ENCODE measurements at regions of chr6 and their contacts with region 1.

Region 1: DNA sequence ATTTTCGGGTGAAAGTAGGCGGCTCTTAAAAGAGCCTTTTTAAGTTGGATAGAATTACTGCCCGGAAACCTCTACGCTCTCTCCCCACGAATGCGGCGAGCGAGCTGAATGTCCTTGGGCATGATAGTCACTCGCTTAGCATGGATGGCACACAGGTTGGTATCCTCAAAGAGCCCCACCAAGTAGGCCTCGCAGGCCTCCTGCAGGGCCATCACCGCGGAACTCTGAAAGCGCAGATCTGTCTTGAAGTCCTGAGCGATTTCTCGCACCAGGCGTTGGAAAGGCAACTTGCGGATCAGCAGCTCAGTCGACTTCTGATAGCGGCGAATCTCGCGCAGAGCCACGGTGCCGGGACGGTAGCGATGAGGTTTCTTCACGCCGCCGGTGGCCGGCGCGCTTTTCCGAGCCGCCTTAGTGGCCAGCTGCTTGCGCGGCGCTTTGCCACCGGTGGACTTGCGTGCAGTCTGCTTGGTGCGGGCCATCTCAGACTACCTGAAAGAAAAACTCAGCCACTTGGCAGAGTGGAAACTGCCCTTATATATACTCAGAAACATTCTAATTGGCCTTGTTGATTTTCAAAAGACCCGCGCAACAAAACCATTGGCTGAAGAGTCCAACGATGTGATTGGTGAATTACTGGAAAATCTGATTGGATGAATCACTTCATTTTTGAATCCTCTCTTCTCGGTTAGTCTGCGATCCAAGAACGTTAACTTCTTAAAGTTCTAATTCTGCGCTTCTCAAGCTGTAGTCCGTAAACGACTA is 93.9 kb upstream of the BTN3A2 start:
- DNase-seq: peak; percentile 90
- ATAC-seq: peak; percentile 19
- H3K4me3 ChIP-seq: peak overlapping the region; percentile 63 to 88 (median 75)
- H3K4me3 Mint-ChIP-seq: no peak overlapping the region
- H3K27ac ChIP-seq: peak overlapping the region; percentile 79 to 86
- H3K27ac Mint-ChIP-seq: no peak overlapping the region
- H3K4me1 ChIP-seq: peaks cover 15 to 37% of the 10 kb centered on the region in 2 donors
- H3K4me1 Mint-ChIP-seq: peaks cover 20% of the 10 kb centered on the region
- H3K27me3 ChIP-seq: no peaks in the 10 kb centered on the region
- H3K27me3 Mint-ChIP-seq: no peaks in the 10 kb centered on the region
- CTCF ChIP-seq: no peak

Region 2: GRCh38 chr6:26103770-26104456 is 167.2 kb before region 1 on chr6:
- CTCF ChIA-PET with region 1: interaction called, 3 read pairs
- POLR2A ChIA-PET with region 1: interaction called, 7 read pairs
- intact Hi-C with region 1: loop called (anchors 5 kb)
- DNase-seq: peak; percentile 98
- ATAC-seq: peak; percentile 87
- H3K4me3 ChIP-seq: peak overlapping the region; percentile 52 to 81 (median 62)
- H3K4me3 Mint-ChIP-seq: peak overlapping the region; percentile 88
- H3K27ac ChIP-seq: peak overlapping the region; percentile 78 to 79
- H3K27ac Mint-ChIP-seq: peak overlapping the region; percentile 99
- H3K4me1 ChIP-seq: peaks cover 5 to 15% of the 10 kb centered on the region in 2 donors
- H3K4me1 Mint-ChIP-seq: peaks cover 15% of the 10 kb centered on the region
- H3K27me3 ChIP-seq: no peaks in the 10 kb centered on the region
- H3K27me3 Mint-ChIP-seq: no peaks in the 10 kb centered on the region
- CTCF ChIP-seq: peak; percentile 66

Region 3: DNA sequence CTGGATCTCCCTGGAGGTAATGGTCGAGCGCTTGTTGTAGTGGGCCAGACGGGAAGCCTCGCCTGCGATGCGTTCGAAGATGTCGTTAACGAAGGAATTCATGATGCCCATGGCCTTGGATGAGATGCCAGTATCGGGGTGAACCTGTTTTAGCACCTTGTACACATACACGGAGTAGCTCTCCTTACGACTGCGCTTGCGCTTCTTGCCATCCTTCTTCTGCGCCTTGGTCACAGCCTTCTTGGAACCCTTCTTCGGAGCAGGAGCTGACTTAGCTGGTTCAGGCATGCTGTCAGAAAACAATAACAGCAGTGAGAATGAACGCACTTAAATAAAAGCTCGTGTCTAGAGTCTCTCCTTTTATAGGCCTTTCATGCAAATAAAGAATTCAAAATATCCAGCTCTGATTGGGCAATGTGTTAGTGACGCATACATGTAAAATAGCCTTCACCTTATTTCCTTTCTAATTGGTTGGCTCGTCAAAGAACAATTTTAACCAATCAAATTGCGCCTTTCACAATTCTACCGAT is 54.7 kb before region 1 on chr6:
- CTCF ChIA-PET with region 1: interaction called, 15 read pairs
- POLR2A ChIA-PET with region 1: interaction called, 86 read pairs
- intact Hi-C with region 1: loop called (anchors 1 kb)
- DNase-seq: peak; percentile 96
- ATAC-seq: peak; percentile 80
- H3K4me3 ChIP-seq: peak overlapping the region; percentile 70 to 93 (median 74)
- H3K4me3 Mint-ChIP-seq: no peak overlapping the region
- H3K27ac ChIP-seq: peak overlapping the region; percentile 81 to 82
- H3K27ac Mint-ChIP-seq: no peak overlapping the region
- H3K4me1 ChIP-seq: peaks cover 15 to 26% of the 10 kb centered on the region in 2 donors
- H3K4me1 Mint-ChIP-seq: peaks cover 19% of the 10 kb centered on the region
- H3K27me3 ChIP-seq: no peaks in the 10 kb centered on the region
- H3K27me3 Mint-ChIP-seq: no peaks in the 10 kb centered on the region
- CTCF ChIP-seq: no peak

Region 4: DNA sequence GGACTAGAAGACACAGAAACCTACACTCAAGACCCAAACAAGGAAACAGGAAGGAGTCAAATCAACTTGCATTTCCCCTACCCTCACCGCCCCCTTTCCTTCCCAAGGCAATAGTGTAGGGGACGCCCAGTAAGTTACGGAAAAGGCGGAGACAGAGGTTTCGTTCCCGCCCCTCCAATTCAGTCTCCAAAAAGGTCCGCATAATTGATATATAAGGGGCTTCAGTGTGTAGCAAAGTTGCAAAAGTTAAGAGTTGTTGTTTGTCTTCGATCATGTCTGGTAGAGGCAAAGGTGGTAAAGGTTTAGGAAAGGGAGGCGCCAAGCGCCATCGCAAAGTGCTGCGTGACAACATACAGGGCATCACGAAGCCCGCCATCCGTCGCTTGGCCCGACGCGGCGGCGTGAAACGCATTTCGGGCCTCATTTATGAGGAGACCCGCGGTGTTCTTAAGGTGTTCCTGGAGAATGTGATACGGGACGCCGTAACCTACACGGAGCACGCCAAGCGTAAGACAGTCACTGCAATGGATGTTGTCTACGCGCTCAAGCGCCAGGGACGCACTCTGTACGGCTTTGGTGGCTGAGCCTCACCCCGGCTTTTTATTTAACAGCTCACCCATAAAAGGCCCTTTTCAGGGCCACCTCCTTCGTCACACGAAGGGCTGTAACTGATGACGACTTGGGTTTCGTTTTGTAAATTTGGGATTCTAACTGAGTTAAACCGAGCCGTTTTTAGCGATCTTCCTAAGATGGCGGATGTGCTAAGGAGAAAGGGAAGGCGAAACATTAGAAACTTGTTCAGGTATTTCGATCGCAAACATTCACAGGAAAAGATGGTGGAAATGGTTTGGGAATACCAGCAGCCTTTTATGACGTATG is 30.7 kb before region 1 on chr6:
- CTCF ChIA-PET with region 1: interaction called, 4 read pairs
- POLR2A ChIA-PET with region 1: interaction called, 60 read pairs
- intact Hi-C with region 1: loop called (anchors 1 kb)
- DNase-seq: peak; percentile 91
- ATAC-seq: peak; percentile 80
- H3K4me3 ChIP-seq: peak overlapping the region; percentile 55 to 87 (median 67)
- H3K4me3 Mint-ChIP-seq: peak overlapping the region; percentile 87
- H3K27ac ChIP-seq: peak overlapping the region; percentile 76 to 93
- H3K27ac Mint-ChIP-seq: peak overlapping the region; percentile 94
- H3K4me1 ChIP-seq: peaks cover 6 to 16% of the 10 kb centered on the region in 2 donors
- H3K4me1 Mint-ChIP-seq: peaks cover 20% of the 10 kb centered on the region
- H3K27me3 ChIP-seq: no peaks in the 10 kb centered on the region
- H3K27me3 Mint-ChIP-seq: no peaks in the 10 kb centered on the region
- CTCF ChIP-seq: no peak

Region 5: DNA sequence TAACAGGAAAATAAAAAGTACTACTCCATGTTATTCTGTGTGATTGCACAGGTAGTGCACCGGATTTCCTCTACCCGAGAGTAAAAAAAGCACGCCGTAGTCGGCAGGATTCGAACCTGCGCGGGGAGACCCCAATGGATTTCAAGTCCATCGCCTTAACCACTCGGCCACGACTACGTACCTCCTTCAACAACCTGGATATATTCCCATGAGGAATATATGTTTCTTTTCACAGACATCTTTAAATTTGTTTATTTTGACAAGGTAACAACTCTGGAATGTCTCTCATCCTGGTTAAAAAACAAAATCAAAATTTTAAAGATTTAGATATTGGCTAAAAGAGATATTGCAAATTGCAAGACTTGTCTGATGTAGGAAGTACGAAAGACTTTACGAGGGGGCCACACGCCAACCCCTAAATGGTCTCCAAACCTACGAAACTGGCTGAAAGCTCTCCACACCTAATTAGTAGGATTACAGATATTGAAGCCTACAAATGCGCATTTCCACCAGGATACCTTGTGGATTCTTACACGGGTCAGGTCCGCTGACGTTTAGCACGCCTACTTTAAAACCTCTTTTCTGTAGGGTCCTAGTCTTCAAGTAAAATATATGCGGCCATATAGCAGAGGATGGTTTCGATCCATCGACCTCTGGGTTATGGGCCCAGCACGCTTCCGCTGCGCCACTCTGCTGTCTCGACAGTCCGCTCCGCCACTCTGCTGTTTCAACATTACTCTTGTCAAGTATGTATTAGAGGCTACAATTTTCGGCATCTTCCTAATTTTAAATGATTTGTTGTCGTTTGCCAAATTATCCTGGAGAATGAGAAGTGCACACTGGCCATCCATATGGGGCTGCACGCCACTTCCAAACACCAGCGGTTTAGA is 41.7 kb after region 1 on chr6:
- CTCF ChIA-PET with region 1: no interaction called
- POLR2A ChIA-PET with region 1: no interaction called
- intact Hi-C with region 1: loop called (anchors 5 kb)
- DNase-seq: peak; percentile 90
- ATAC-seq: peak; percentile 75
- H3K4me3 ChIP-seq: peak overlapping the region; percentile 64 to 100 (median 77)
- H3K4me3 Mint-ChIP-seq: peak overlapping the region; percentile 93
- H3K27ac ChIP-seq: peak overlapping the region in 1 of 2 donors; percentile 56
- H3K27ac Mint-ChIP-seq: peak overlapping the region; percentile 92
- H3K4me1 ChIP-seq: peaks cover 15 to 23% of the 10 kb centered on the region in 2 donors
- H3K4me1 Mint-ChIP-seq: peaks cover 32% of the 10 kb centered on the region
- H3K27me3 ChIP-seq: no peaks in the 10 kb centered on the region
- H3K27me3 Mint-ChIP-seq: peaks cover 4% of the 10 kb centered on the region
- CTCF ChIP-seq: no peak

Region 6: DNA sequence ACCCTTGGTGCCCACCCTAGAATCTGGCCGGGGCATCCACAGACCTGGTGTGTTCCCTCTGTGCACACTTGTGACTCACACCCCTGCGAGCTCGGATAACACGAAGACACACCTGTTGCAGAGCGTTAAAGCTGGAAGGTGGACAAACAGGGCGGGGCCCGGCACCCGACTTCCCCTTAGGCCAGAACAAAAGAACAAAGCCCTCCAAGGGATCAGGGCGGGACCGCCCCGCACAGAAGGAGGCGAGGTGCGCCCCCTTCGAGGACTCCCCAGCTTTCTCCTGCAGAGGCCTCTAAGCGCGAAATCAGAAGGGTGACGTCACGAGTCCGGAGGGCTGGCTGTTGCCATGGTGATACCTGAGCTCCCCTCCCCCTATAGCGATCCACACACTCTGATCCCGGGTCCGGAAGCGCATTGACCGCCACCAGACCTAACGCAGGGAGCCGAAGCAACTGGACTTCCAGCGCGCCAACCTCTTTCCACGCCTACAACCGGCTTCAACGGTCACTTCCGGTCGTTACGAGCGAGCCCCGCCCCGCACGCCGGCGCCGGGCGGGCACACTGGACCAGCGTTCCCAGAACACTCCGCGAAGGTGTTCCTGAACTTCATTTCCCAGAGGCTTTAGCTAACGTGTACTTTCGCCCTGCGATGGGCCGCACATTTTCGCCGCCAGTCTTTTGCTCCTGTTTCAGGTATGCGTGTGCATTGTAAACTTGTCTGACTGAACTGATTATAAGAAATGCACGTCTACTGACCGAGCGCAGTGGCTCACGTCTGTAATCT is 1201.7 kb after region 1 on chr6 and contains the start of gene ZNF184:
- CTCF ChIA-PET with region 1: no interaction called
- POLR2A ChIA-PET with region 1: no interaction called
- intact Hi-C with region 1: loop called (anchors 10 kb)
- DNase-seq: peak; percentile 96
- ATAC-seq: peak; percentile 92
- H3K4me3 ChIP-seq: peak within 1 kb of the TSS; percentile 75 to 93 (median 83)
- H3K4me3 Mint-ChIP-seq: peak within 1 kb of the TSS; percentile 100
- H3K27ac ChIP-seq: peak within 1 kb of the TSS; percentile 89 to 97
- H3K27ac Mint-ChIP-seq: peak within 1 kb of the TSS; percentile 99
- H3K4me1 ChIP-seq: peaks cover 16 to 22% of the 10 kb centered on the region in 2 donors
- H3K4me1 Mint-ChIP-seq: peaks cover 44% of the 10 kb centered on the region
- H3K27me3 ChIP-seq: no peaks in the 10 kb centered on the region
- H3K27me3 Mint-ChIP-seq: no peaks in the 10 kb centered on the region
- CTCF ChIP-seq: peak; percentile 31
- total RNA-seq, gene ZNF184: 11.8 TPM in 2 replicates

Measured in B cell (primary cell).